ENCODE measurements at regions of chr5 and their contacts with region 1.

Region 1: GRCh38 chr5:122101636-122102285 is 23.7 kb upstream of the LOX start:
- DNase-seq: no peak
- ATAC-seq: peak; percentile 78; the same call in 1 of the 2 replicates
- H3K4me3 ChIP-seq: no peak overlapping the region
- H3K27ac ChIP-seq: no peak overlapping the region
- H3K4me1 ChIP-seq: no peaks in the 10 kb centered on the region
- H3K27me3 ChIP-seq: no peaks in the 10 kb centered on the region
- CTCF ChIP-seq: peak; percentile 68; the same call in 1 of the 2 replicates

Region 2: GRCh38 chr5:120655828-120656435 is 1445.8 kb before region 1 on chr5:
- CTCF ChIA-PET with region 1: interaction called, 11 read pairs
- POLR2A ChIA-PET with region 1: no interaction called
- in situ Hi-C with region 1: no loop called
- intact Hi-C with region 1: no loop called
- DNase-seq: no peak
- ATAC-seq: no peak
- H3K4me3 ChIP-seq: no peak overlapping the region
- H3K27ac ChIP-seq: no peak overlapping the region
- H3K4me1 ChIP-seq: no peaks in the 10 kb centered on the region
- H3K27me3 ChIP-seq: no peaks in the 10 kb centered on the region
- CTCF ChIP-seq: peak; percentile 80

Region 3: DNA sequence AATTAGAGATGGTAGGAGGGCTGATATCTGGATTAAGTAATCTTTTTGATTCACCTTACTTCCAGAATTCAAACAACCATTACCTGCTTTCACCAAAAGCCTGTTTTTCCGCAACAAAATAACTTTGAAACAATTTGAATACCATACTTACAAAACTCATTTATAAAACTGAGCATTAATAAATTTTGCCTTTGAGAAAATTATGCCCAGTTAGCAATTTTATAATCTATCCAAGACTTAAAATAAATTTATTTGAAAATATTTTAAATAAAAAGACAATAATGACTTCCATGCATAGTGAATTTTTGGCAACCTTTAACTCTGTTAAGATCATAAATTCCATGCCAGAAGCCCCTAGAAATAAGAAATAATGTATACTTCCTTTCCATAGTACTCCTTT is 321.4 kb before region 1 on chr5:
- CTCF ChIA-PET with region 1: no interaction called
- POLR2A ChIA-PET with region 1: no interaction called
- in situ Hi-C with region 1: no loop called
- intact Hi-C with region 1: no loop called
- DNase-seq: no peak
- ATAC-seq: no peak
- H3K4me3 ChIP-seq: no peak overlapping the region
- H3K27ac ChIP-seq: no peak overlapping the region
- H3K4me1 ChIP-seq: no peaks in the 10 kb centered on the region
- H3K27me3 ChIP-seq: no peaks in the 10 kb centered on the region
- CTCF ChIP-seq: no peak

Region 4: GRCh38 chr5:121968910-121969607 is 132.7 kb before region 1 on chr5:
- CTCF ChIA-PET with region 1: interaction called, 3 read pairs
- POLR2A ChIA-PET with region 1: no interaction called
- in situ Hi-C with region 1: no loop called
- intact Hi-C with region 1: loop called (anchors 2 kb)
- DNase-seq: peak; percentile 94
- ATAC-seq: peak; percentile 96
- H3K4me3 ChIP-seq: peak overlapping the region in 1 of 2 experiments; percentile 6; a peak in 2 of 4 replicates
- H3K27ac ChIP-seq: peak overlapping the region; percentile 77
- H3K4me1 ChIP-seq: peaks cover 34% of the 10 kb centered on the region
- H3K27me3 ChIP-seq: no peaks in the 10 kb centered on the region
- CTCF ChIP-seq: no peak

Region 5: DNA sequence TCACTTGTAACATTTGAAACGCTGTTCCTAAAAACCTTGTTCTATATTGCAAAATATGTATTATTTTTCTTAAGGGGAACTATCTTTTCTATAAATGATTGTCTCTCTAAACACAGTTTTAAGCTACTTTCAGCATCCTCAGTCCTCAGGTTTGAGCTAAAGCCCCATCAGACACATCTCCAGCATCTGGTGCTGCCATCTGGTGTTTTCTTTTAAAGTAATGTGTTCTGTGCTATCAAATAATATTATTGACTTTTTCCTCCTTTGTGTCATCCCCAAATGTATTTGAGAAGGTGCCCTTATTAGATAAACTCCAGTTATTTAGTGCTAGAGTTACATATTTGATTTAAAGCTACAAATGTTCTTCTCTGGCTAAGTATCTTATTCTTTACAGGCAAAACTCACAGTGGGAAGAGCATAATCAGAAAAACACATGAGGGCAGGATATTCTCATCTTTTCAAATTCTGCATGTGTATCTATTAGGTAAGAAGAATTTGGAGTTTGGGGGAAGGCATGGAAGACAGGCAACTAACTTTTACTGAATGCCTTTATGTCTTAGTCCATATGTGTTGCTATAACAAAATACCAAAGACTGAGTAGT is 55.1 kb after region 1 on chr5:
- CTCF ChIA-PET with region 1: no interaction called
- POLR2A ChIA-PET with region 1: no interaction called
- in situ Hi-C with region 1: no loop called
- intact Hi-C with region 1: loop called (anchors 2 kb)
- DNase-seq: no peak
- ATAC-seq: no peak; the same call in 1 of the 2 replicates
- H3K4me3 ChIP-seq: no peak overlapping the region
- H3K27ac ChIP-seq: no peak overlapping the region
- H3K4me1 ChIP-seq: no peaks in the 10 kb centered on the region
- H3K27me3 ChIP-seq: no peaks in the 10 kb centered on the region
- CTCF ChIP-seq: peak; percentile 50; the same call in 1 of the 2 replicates